Naive thymus-derived CD4-positive, alpha-beta T cell (primary cell): ENCODE measurements at regions of chr19 and their contacts with region 1.

Region 1: DNA sequence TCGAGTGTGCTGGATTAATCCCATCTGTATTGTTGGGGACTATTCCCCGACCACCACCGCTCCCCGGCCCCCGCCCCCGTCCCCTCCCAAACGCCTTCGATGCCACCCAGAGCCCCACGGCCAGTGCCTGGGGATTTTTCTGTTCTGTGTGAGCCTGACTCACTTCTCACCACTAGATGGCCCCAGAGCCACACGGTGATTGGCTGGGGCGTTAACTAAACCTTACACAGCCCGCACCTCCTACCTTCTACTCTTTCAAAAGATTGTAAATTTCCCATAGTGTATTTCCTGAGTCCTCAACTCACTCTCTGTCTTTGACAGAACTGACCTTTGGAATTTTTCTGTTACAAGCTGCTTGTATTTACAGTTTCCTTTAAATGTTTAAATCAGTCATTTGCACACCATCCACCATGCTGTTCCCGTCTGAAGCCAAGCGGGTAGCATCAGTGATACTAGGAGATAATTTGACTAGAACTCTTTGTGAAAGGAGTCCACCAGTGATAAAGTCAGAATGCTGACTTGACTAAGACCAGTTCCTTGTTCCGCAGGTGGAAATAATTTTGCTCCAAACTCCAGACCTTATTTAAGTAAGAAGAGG is 61.4 kb downstream of the RFX2 start:
- DNase-seq: peak; percentile 56 to 81 (median 74)
- ATAC-seq: peak; percentile 100
- H3K4me3 ChIP-seq: no peak overlapping the region
- H3K4me3 Mint-ChIP-seq: no peak overlapping the region
- H3K27ac ChIP-seq: no peak overlapping the region
- H3K27ac Mint-ChIP-seq: no peak overlapping the region
- H3K4me1 ChIP-seq: no peaks in the 10 kb centered on the region
- H3K4me1 Mint-ChIP-seq: peaks cover 0 to 5% (median 4%) of the 10 kb centered on the region in 7 donors
- H3K27me3 ChIP-seq: no peaks in the 10 kb centered on the region
- H3K27me3 Mint-ChIP-seq: peaks cover 0 to 11% (median 0%) of the 10 kb centered on the region in 5 donors

Region 2: GRCh38 chr19:6100284-6100915 is 51.5 kb after region 1 on chr19:
- CTCF ChIA-PET with region 1: interaction called, 10 read pairs
- POLR2A ChIA-PET with region 1: interaction called, 3 read pairs
- intact Hi-C with region 1: loop called in 1 of 2 experiments (anchors 5 kb)
- DNase-seq: peak in 8 of 9 donors; percentile 17 to 47 (median 32)
- ATAC-seq: peak; percentile 74
- H3K4me3 ChIP-seq: peak overlapping the region; percentile 48
- H3K4me3 Mint-ChIP-seq: peak overlapping the region; percentile 66 to 89 (median 80)
- H3K27ac ChIP-seq: no peak overlapping the region
- H3K27ac Mint-ChIP-seq: peak overlapping the region; percentile 49 to 88 (median 77)
- H3K4me1 ChIP-seq: peaks cover 0 to 4% of the 10 kb centered on the region in 2 donors
- H3K4me1 Mint-ChIP-seq: peaks cover 9 to 32% (median 19%) of the 10 kb centered on the region in 7 donors
- H3K27me3 ChIP-seq: no peaks in the 10 kb centered on the region
- H3K27me3 Mint-ChIP-seq: no peaks in the 10 kb centered on the region

Region 3: GRCh38 chr19:6161271-6161850 is 112.5 kb after region 1 on chr19:
- CTCF ChIA-PET with region 1: no interaction called
- POLR2A ChIA-PET with region 1: no interaction called
- intact Hi-C with region 1: loop called in 1 of 2 experiments (anchors 1 kb)
- DNase-seq: peak; percentile 10 to 94 (median 78)
- ATAC-seq: peak; percentile 89
- H3K4me3 ChIP-seq: peak overlapping the region; percentile 13
- H3K4me3 Mint-ChIP-seq: peak overlapping the region in 9 of 10 donors; percentile 19 to 75 (median 38)
- H3K27ac ChIP-seq: no peak overlapping the region
- H3K27ac Mint-ChIP-seq: peak overlapping the region in 8 of 9 donors; percentile 33 to 88 (median 74)
- H3K4me1 ChIP-seq: peaks cover 4 to 8% of the 10 kb centered on the region in 2 donors
- H3K4me1 Mint-ChIP-seq: peaks cover 0 to 26% (median 11%) of the 10 kb centered on the region in 7 donors
- H3K27me3 ChIP-seq: no peaks in the 10 kb centered on the region
- H3K27me3 Mint-ChIP-seq: peaks cover 0 to 2% (median 0%) of the 10 kb centered on the region in 5 donors